Heart left ventricle (tissue), 16 donors: ENCODE measurements at regions of chr1 and their contacts with region 1.

Region 1: DNA sequence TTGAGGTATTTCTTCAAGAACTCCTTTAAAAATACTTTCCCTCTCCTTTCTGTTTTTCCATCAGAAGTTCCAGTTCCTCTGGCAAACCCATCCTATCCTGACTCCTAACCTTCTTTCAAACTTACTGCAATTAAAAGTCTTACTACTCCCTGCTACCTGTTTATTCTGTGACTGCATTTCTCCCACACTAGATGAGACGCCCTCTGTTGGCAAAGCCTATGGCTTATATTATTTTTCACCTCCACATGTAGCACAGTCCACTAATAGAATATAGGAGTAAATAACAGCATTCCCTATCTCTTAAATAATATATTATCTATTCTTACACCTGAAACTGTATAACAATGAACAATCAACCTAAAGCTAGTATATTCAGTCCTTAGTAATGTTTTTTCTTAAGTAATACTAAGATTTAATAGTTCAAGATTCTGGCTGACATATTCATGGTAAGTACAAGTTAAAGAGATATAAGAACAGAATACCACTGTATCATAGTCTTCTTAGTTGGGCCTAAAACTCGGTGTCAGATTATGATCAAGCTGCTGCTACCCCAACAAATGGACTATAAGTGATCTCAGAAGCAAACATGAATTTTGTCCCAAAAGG is 54.8 kb downstream of the RAB3GAP2 start:
- DNase-seq: no peak
- ATAC-seq: peak in 2 of 4 donors; percentile 37 to 47
- H3K4me3 ChIP-seq: no peak overlapping the region
- H3K27ac ChIP-seq: no peak overlapping the region
- H3K4me1 ChIP-seq: peaks cover 0 to 29% (median 6%) of the 10 kb centered on the region in 12 donors
- H3K27me3 ChIP-seq: no peaks in the 10 kb centered on the region
- CTCF ChIP-seq: peak in 8 of 12 donors; percentile 12 to 44 (median 34)
- POLR2A ChIP-seq: no peak

Region 2: GRCh38 chr1:220733090-220733601 is 515.7 kb after region 1 on chr1:
- intact Hi-C with region 1: loop called in 1 of 10 experiments (anchors 5 kb)
- DNase-seq: peak; percentile 73 to 86 (median 82)
- ATAC-seq: peak; percentile 92 to 96 (median 96)
- H3K4me3 ChIP-seq: peak overlapping the region in 10 of 12 donors; percentile 10 to 50 (median 38)
- H3K27ac ChIP-seq: peak overlapping the region; percentile 54 to 89 (median 79)
- H3K4me1 ChIP-seq: peaks cover 0 to 21% (median 5%) of the 10 kb centered on the region in 12 donors
- H3K27me3 ChIP-seq: no peaks in the 10 kb centered on the region
- CTCF ChIP-seq: peak; percentile 68 to 95 (median 88)
- POLR2A ChIP-seq: no peak